Ascending aorta (tissue), 2 donors: ENCODE measurements at regions of chr3 and their contacts with region 1.

Region 1: DNA sequence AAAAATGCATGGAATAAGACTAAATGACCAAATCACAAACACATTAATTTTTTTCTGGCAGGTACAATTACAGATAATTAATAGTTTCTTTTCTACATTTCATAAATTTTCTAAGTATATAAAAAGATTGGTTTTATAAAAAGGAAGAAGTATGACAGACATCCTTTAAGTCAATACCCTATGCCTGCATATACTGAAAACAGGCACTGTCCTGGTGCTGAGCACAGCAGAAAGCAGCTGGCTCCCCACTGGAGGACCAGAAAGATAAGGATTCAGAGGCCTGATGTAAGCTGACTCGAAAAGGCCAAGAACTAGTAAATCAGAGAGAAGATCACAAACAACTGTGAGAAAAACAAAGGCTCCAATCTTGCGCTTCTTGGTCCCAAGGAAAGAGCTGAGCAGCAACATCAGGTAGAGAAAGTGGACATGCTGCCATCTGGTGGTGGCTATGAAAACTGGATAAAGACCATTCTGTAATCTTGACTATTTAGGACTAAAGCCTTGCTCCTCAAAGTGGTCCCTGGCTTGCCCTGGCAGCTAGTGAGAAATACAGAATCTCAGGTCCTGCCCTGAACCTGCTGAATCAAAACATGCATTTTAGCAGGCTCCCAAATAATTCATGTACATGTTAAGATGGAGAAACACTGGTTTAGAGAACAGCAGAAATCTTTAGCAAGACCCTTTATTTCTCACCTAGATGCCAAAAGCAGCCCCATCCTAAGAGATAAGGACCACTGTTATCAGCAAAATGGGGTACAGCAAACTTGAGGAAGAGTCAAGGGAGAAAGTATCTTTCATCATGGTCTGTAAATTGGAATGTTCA is 76.0 kb downstream of the TRANK1 start:
- DNase-seq: no peak
- H3K4me3 ChIP-seq: no peak overlapping the region
- H3K27ac ChIP-seq: no peak overlapping the region
- H3K4me1 ChIP-seq: no peaks in the 10 kb centered on the region
- H3K27me3 ChIP-seq: no peaks in the 10 kb centered on the region
- CTCF ChIP-seq: peak; percentile 50 to 82 (median 66)

Region 2: GRCh38 chr3:36729204-36730056 is 139.4 kb before region 1 on chr3:
- intact Hi-C with region 1: loop called (anchors 2 kb)
- DNase-seq: no peak
- H3K4me3 ChIP-seq: no peak overlapping the region
- H3K27ac ChIP-seq: no peak overlapping the region
- H3K4me1 ChIP-seq: no peaks in the 10 kb centered on the region
- H3K27me3 ChIP-seq: no peaks in the 10 kb centered on the region
- CTCF ChIP-seq: peak; percentile 48 to 69 (median 59)